ENCODE measurements at regions of chr6 and their contacts with region 1.

Region 1: DNA sequence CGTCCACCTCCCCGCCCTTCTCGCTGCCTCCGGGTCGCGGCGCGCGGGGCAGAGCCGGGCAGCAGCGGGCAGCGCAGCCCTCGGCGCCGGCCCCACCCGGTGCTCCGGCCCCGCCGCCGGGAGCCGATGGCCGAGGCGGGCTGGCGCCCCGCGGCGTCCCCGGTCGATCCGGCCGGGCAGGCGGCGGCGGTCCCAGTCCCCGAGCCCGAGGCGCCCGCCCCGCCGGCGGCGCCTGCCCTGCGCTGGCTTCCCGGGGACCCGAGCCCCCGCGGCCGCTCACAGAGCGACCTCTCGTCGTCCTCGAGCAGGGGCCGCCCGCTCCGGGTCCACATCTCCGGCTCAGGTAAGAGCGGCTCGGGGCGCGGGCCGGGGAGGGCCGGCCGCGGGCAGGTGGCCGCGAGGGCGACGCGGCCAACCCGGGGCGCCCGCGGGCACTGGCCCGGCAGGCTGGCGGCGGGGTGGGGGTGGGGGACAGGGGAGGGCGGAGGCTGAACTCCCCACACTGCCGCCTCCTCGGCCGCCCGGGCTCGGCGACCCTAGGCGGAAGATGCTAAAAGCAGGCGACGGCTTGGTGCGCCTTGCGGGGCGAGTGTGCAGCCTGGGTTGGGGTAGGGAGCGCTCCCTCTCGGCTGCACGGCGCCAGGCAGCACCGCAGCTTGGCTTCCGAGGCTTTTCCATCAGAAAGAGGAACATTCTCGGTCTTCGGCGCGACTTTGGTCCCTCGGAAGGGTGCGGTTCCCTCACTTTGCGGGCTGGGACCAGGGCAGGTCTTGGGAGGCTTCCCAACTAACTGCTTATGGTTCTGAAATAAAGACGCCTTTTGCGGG is 25.6 kb upstream of the FUCA2 start:
- DNase-seq: peak; percentile 61
- H3K4me3 ChIP-seq: peak overlapping the region; percentile 18 to 38 (median 30)
- H3K27ac ChIP-seq: no peak overlapping the region
- H3K4me1 ChIP-seq: no peaks in the 10 kb centered on the region
- H3K27me3 ChIP-seq: peaks cover 5% of the 10 kb centered on the region in 2 experiments
- CTCF ChIP-seq: peak; percentile 27 to 65
- POLR2A ChIP-seq: no peak

Region 2: DNA sequence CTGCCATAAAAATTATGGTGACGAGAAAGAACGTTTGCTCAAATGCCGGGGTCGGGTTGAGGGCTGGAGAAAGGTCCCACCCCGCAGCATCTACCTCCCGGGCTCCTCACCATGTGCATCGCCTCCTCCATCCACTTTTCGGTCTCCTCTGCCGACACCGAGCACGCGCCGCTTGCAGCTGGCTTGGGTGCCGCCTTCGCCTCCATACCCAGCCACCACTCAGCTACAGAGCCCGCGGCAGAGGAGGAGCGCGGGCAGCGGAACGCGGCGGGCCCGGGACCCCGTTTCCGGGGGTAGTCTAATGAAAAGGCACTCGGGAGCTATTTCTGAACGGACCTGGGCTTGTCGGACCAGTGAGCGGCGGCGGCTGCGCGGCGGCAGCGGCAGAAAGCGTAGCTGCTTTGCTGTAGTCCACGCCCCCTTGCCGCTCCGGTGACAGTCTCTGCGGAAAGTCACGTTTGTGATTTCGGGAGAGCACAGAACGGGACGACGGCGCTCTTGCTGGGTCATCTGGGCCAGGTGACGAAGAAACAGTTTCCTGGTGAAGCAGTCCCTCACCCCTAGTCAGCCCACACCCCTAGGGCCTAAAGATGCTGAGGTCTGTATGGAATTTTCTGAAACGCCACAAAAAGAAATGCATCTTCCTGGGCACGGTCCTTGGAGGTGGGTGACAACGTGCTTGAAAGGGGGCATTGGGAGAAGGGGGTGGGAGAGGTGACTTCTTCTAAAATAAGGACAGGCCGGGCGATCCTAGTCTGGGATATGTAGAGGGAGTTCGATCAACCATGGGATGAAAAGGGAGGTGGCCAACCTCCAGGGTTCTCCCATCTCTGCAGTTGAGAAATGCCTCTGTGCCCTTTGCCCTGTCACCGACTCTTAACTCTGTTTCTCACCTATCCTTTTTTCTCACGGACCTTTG is 86.4 kb before region 1 on chr6 and contains the starts of genes ADAT2 and PEX3:
- CTCF ChIA-PET with region 1: no interaction called
- POLR2A ChIA-PET with region 1: no interaction called
- dilution Hi-C with region 1: no loop called
- intact Hi-C with region 1: loop called (anchors 1 kb)
- DNase-seq: peak; percentile 94
- H3K4me3 ChIP-seq: peak within 1 kb of the TSS; percentile 52 to 90 (median 73)
- H3K27ac ChIP-seq: peak within 1 kb of the TSS; percentile 65
- H3K4me1 ChIP-seq: peaks cover 18% of the 10 kb centered on the region
- H3K27me3 ChIP-seq: no peaks in the 10 kb centered on the region
- CTCF ChIP-seq: no peak
- POLR2A ChIP-seq: peak; percentile 87
- total RNA-seq, gene ADAT2: 9.8 and 11.3 TPM in 2 replicates
- total RNA-seq, gene PEX3: 20.0 and 21.7 TPM in 2 replicates

Region 3: GRCh38 chr6:143510991-143511891 is 25.8 kb before region 1 on chr6 and contains the start of gene FUCA2:
- CTCF ChIA-PET with region 1: interaction called, 10 read pairs
- POLR2A ChIA-PET with region 1: no interaction called
- dilution Hi-C with region 1: no loop called
- intact Hi-C with region 1: loop called (anchors 1 kb)
- DNase-seq: peak; percentile 81
- H3K4me3 ChIP-seq: peak within 1 kb of the TSS; percentile 48 to 82 (median 53)
- H3K27ac ChIP-seq: peak within 1 kb of the TSS; percentile 69
- H3K4me1 ChIP-seq: peaks cover 18% of the 10 kb centered on the region
- H3K27me3 ChIP-seq: peaks cover 6 to 12% of the 10 kb centered on the region in 2 experiments
- CTCF ChIP-seq: peak in 1 of 2 donors; percentile 14
- POLR2A ChIP-seq: peak; percentile 88
- total RNA-seq, gene FUCA2: 80.9 and 85.0 TPM in 2 replicates

Measured in endothelial cell of umbilical vein (primary cell).